Natural killer cell (primary cell): ENCODE measurements at regions of chr14 and their contacts with region 1.

Region 1: DNA sequence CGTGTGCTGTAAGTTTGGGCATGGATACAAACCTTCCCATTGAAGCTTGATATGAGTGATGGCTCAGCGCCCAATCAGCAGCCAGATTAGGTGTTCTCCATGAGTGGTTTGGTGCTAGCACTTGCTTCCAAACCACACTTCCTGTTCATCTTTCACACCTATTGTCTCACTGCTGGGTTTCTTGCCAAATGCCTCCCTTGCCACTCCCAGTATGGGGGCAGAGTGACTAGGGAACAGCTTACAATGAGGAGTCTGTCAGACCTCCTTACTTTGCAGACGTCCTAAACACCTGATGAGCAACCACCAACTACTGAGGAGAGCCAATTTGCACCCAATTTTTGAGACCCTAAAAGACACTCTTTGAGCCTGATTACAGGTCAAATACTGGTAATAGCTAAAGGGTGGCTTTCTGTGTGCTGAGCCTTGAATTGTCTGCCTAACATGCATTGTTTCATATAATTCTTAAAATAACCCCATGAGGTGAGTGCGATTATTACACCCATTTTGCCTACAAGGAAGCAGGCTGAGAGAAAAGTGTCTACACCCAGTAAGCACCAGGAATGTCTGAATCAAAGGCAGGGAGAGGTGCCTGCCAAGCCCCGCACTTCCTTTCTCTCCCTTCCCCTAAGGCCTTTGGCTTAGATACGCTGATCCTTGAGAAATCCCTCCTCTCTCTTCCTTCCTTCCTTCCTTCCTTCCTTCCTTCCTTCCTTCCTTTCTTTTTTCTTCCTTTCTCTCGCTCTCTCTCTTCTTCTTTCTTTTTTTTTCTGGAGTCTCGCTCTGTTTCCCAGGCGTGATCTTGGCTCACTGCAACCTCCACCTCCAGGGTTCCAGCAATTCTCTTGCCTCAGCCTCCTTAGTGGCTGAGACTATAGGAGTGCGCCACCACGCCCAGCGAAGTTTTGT is 48.2 kb upstream of the FOS start:
- DNase-seq: peak; percentile 61 to 87
- ATAC-seq: peak; percentile 70 to 85 (median 75)
- H3K4me3 ChIP-seq: no peak overlapping the region
- H3K4me3 Mint-ChIP-seq: peak overlapping the region; percentile 63
- H3K27ac ChIP-seq: peak overlapping the region; percentile 30
- H3K27ac Mint-ChIP-seq: peak overlapping the region; percentile 82 to 85
- H3K4me1 ChIP-seq: peaks cover 66% of the 10 kb centered on the region
- H3K4me1 Mint-ChIP-seq: peaks cover 48 to 79% of the 10 kb centered on the region in 2 donors
- H3K27me3 ChIP-seq: no peaks in the 10 kb centered on the region
- H3K27me3 Mint-ChIP-seq: no peaks in the 10 kb centered on the region
- CTCF ChIP-seq: peak; percentile 18

Region 2: DNA sequence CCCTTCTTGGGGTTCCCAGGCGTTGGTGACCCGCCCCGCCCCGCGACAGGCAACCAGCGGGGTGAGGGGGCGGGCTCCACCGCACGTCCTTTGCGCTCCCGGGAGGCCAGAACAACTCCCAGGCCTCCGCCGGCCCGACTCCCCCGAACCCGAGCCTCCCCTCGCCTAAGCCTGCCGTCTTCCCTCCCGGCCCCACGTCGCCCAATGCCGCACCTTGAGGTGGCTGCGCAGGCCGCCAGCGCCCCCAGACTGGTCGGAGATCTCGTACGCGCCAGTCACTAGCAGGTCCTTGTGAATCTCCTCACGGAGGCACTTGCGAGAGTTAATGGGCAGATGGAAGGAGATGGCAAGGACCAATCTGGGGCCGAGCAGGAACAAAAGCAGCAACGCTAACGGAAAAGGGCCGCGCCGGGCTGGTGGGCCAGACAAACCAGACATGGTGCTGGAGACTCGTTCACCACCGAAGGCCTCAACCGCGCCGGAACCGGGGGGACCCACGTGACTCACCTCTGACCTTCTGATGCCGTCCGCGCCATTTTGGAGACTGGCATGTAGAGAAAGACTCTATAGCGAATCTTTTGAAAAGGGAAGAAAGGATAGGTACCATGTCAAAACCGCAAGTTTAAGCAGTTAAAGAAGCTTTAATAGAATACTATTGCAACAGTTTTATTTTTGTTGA is 54.1 kb before region 1 on chr14 and contains the start of gene TMED10:
- intact Hi-C with region 1: loop called (anchors 1 kb)
- DNase-seq: peak; percentile 90 to 95
- ATAC-seq: peak; percentile 72 to 89 (median 78)
- H3K4me3 ChIP-seq: peak within 1 kb of the TSS; percentile 73
- H3K4me3 Mint-ChIP-seq: peak within 1 kb of the TSS; percentile 93
- H3K27ac ChIP-seq: peak within 1 kb of the TSS; percentile 94
- H3K27ac Mint-ChIP-seq: peak within 1 kb of the TSS; percentile 99 to 100
- H3K4me1 ChIP-seq: peaks cover 16% of the 10 kb centered on the region
- H3K4me1 Mint-ChIP-seq: peaks cover 43 to 46% of the 10 kb centered on the region in 2 donors
- H3K27me3 ChIP-seq: no peaks in the 10 kb centered on the region
- H3K27me3 Mint-ChIP-seq: no peaks in the 10 kb centered on the region
- CTCF ChIP-seq: no peak
- total RNA-seq, gene TMED10: 216 to 244 (median 231) TPM

Region 3: GRCh38 chr14:75188520-75189268 is 41.7 kb before region 1 on chr14:
- intact Hi-C with region 1: no loop called
- DNase-seq: peak in 1 of 2 donors; percentile 18
- ATAC-seq: peak; percentile 18 to 85 (median 41)
- H3K4me3 ChIP-seq: no peak overlapping the region
- H3K4me3 Mint-ChIP-seq: no peak overlapping the region
- H3K27ac ChIP-seq: no peak overlapping the region
- H3K27ac Mint-ChIP-seq: no peak overlapping the region
- H3K4me1 ChIP-seq: peaks cover 10% of the 10 kb centered on the region
- H3K4me1 Mint-ChIP-seq: peaks cover 0 to 5% of the 10 kb centered on the region in 2 donors
- H3K27me3 ChIP-seq: no peaks in the 10 kb centered on the region
- H3K27me3 Mint-ChIP-seq: peaks cover 6 to 17% of the 10 kb centered on the region in 2 donors
- CTCF ChIP-seq: no peak

Region 4: DNA sequence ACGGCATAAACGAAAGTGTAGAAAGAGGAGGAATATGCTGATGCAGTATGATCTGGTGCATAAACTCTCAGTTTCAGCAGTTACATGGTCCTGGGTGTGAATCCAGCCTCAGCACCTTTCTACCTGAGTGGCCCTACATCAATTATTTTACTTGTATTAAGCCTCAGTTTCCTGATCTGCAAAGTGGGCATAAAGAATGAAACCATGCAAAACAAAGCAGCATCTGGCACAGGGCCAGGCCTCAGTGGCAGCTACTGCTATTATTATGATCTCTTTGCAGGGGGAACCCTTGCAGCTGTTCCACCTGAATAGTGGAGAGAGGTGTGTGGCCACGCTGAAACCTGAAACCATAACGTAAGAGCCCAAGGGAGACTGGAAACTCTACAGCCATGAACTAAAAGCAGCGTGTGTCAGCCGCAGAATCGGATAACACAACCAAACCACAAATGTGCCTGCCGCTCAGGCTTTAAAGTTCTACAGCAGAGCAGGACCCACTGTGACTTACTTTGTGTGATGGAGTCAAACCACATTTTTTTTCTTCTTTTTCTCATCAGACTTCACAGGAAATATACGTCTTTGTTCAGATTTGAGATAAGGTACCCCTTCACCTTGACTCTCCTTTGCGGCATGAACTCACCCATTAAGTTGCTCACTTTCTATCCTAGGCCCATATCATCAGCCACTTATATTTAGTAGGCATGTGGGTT is 19.0 kb after region 1 on chr14:
- intact Hi-C with region 1: loop called (anchors 1 kb)
- DNase-seq: peak; percentile 76 to 95
- ATAC-seq: peak; percentile 68 to 84 (median 80)
- H3K4me3 ChIP-seq: no peak overlapping the region
- H3K4me3 Mint-ChIP-seq: peak overlapping the region; percentile 84
- H3K27ac ChIP-seq: peak overlapping the region; percentile 88
- H3K27ac Mint-ChIP-seq: peak overlapping the region; percentile 90 to 93
- H3K4me1 ChIP-seq: peaks cover 61% of the 10 kb centered on the region
- H3K4me1 Mint-ChIP-seq: peaks cover 58% of the 10 kb centered on the region in 2 donors
- H3K27me3 ChIP-seq: no peaks in the 10 kb centered on the region
- H3K27me3 Mint-ChIP-seq: no peaks in the 10 kb centered on the region
- CTCF ChIP-seq: no peak

Region 5: DNA sequence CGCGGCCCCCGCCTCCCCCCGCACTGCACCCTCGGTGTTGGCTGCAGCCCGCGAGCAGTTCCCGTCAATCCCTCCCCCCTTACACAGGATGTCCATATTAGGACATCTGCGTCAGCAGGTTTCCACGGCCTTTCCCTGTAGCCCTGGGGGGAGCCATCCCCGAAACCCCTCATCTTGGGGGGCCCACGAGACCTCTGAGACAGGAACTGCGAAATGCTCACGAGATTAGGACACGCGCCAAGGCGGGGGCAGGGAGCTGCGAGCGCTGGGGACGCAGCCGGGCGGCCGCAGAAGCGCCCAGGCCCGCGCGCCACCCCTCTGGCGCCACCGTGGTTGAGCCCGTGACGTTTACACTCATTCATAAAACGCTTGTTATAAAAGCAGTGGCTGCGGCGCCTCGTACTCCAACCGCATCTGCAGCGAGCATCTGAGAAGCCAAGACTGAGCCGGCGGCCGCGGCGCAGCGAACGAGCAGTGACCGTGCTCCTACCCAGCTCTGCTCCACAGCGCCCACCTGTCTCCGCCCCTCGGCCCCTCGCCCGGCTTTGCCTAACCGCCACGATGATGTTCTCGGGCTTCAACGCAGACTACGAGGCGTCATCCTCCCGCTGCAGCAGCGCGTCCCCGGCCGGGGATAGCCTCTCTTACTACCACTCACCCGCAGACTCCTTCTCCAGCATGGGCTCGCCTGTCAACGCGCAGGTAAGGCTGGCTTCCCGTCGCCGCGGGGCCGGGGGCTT is 48.2 kb after region 1 on chr14 and contains the start of gene FOS:
- intact Hi-C with region 1: loop called (anchors 1 kb)
- DNase-seq: peak; percentile 94 to 97
- ATAC-seq: peak; percentile 62 to 84 (median 71)
- H3K4me3 ChIP-seq: peak within 1 kb of the TSS; percentile 97
- H3K4me3 Mint-ChIP-seq: peak within 1 kb of the TSS; percentile 93
- H3K27ac ChIP-seq: peak within 1 kb of the TSS; percentile 84
- H3K27ac Mint-ChIP-seq: peak within 1 kb of the TSS; percentile 93 to 95
- H3K4me1 ChIP-seq: peaks cover 65% of the 10 kb centered on the region
- H3K4me1 Mint-ChIP-seq: peaks cover 63 to 79% of the 10 kb centered on the region in 2 donors
- H3K27me3 ChIP-seq: peaks cover 21% of the 10 kb centered on the region
- H3K27me3 Mint-ChIP-seq: peaks cover 20 to 26% of the 10 kb centered on the region in 2 donors
- CTCF ChIP-seq: no peak
- total RNA-seq, gene FOS: 2,527 to 3,257 (median 3,104) TPM